Sciatic nerve (tissue), 2 donors: ENCODE measurements at regions of chr15 and their contacts with region 1.

Region 1: GRCh38 chr15:40128766-40129660 is 20.3 kb upstream of the BMF start:
- DNase-seq: no peak
- ATAC-seq: no peak

Region 2: DNA sequence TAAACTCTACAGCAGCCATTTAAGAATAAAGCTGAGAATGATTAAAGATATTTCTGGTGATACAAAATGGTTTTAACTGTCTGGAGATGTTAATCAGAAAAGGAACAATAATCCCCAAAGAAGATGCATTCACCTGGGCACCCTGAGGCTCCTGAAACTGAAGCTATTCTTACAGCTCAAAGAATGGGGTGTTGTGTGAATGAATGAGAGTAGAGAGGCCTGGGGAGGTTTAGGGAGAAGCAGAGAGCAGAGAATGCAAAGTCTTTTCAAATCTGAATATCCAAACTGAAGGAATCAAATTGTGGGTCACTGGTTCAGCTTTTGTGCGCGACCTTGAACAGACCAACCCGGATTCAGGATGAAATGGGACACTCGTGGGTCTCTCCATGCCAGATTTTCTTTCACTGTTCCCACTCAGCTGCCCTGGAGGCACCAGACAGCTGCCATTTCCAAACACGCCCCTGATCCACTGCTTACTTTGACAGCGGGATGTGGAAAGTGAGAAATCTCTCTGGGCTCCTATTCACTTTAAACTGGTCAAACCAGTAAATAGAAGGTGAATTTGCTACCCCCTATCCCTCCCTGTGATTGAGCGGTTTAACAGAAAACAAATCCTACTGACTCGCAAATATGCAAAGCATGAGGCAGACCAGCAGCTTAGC is 1033.7 kb before region 1 on chr15:
- intact Hi-C with region 1: no loop called
- DNase-seq: no peak
- ATAC-seq: no peak

Region 3: DNA sequence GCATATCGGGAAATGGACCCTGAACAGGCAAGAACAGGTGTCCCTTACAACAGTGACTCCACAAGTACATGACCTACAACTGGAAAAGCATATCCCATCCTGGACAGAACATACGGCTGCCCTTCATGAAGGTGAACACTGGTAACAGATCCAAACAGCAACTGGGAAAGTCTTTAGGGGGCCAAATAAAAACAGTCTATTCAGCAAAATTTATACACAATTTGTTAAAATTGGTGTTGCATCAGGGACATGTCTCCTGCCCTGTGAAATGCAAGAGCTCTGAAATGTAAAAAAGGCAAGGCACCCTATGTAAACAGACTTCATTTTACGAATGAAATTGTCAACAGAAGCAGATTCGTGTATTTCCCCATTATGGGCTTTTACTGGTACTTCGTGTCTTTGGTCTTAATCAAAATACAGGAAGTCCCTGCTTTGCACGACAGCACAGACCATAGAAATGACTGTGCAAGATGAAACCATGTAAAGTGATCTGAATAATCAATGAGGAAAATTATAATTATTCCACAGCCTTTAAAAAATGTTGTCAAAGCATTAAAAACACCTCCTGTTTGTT is 675.4 kb before region 1 on chr15:
- intact Hi-C with region 1: loop called (anchors 5 kb)
- DNase-seq: no peak
- ATAC-seq: peak; percentile 31

Region 4: DNA sequence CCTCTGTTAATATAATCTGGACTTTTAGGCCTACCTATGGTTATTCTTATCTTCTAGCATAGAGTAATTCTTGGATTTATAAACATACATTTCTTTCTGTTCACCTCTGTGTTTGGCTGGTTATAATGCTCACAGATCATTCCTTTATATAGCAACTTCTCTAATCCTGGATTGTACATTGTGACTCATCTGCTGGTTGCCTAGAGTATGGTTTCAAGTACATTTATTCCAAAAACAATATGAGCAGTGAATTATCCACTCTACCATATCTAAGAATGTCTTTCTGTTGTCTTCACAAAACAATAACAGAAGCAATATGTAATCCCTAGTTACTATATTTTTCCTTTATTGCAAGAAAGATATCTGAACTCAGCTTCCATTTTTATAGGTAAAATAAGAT is 381.7 kb before region 1 on chr15:
- intact Hi-C with region 1: no loop called
- DNase-seq: no peak
- ATAC-seq: no peak

Region 5: DNA sequence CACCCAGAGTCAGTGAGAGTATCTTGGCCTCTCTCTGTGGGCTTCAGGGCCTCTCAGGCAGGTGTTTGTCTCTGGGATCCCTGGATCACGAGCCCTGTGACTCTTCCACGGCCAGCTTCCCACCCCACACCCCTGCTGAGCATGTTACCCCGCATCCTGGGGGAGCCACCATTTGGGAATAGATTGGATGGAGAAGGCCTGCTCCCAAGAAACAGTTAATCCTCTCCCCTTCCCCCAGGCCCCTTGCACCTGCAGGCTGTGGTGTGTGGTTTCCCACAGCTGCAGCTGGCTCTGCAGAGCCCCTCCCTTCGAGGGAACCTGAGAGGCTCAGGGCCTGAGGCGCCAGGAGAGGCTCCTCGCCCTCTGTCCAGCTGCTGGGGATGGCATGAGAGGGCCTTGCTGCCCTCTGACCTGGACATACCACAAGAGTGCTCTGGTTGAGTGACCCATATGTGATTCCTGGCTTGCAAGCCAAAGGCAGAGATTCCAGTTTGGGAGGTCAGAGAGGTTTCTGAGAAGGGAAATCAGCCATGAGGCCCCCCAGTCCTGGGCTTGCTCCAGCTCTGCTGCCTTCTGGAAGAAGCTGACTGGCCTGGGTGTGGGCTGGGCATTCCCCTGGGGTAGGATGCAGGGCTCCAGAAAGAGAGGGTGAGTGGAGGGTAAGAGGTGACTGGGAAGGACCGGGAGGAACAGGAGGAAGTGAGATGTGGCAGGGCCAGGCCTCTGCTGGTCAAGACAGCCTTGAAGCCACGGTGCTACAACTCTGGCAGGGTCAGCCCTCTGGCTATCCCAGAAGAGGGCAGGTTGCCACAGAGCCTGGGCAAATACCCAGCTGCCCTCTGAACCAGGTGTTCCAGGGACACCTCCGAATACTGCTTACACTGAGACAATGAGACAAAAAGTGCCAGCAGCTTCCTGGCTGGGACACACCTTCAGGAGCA is 74.1 kb before region 1 on chr15:
- intact Hi-C with region 1: no loop called
- DNase-seq: no peak
- ATAC-seq: peak; percentile 33

Region 6: GRCh38 chr15:40150163-40150925 is 21.3 kb after region 1 on chr15:
- intact Hi-C with region 1: no loop called
- DNase-seq: no peak
- ATAC-seq: no peak